Activated CD8-positive, alpha-beta memory T cell treated with anti-CD3 and anti-CD28 coated beads, Interleukin-2, amount 10 ng/mL, durations not matched to agents 7 days and 5 days (primary cell): ENCODE measurements at regions of chr1 and their contacts with region 1.

Region 1: GRCh38 chr1:101288491-101288944 is 51.7 kb downstream of the S1PR1 start:
- DNase-seq: peak; percentile 76
- ATAC-seq: peak; percentile 60
- H3K4me3 Mint-ChIP-seq: no peak overlapping the region
- H3K27ac Mint-ChIP-seq: no peak overlapping the region
- H3K4me1 Mint-ChIP-seq: peaks cover 64% of the 10 kb centered on the region
- H3K27me3 Mint-ChIP-seq: no peaks in the 10 kb centered on the region

Region 2: GRCh38 chr1:100909018-100909417 is 379.5 kb before region 1 on chr1:
- CTCF ChIA-PET with region 1: interaction called, 16 read pairs
- DNase-seq: no peak
- ATAC-seq: no peak
- H3K4me3 Mint-ChIP-seq: no peak overlapping the region
- H3K27ac Mint-ChIP-seq: no peak overlapping the region
- H3K4me1 Mint-ChIP-seq: peaks cover 7% of the 10 kb centered on the region
- H3K27me3 Mint-ChIP-seq: no peaks in the 10 kb centered on the region

Region 3: DNA sequence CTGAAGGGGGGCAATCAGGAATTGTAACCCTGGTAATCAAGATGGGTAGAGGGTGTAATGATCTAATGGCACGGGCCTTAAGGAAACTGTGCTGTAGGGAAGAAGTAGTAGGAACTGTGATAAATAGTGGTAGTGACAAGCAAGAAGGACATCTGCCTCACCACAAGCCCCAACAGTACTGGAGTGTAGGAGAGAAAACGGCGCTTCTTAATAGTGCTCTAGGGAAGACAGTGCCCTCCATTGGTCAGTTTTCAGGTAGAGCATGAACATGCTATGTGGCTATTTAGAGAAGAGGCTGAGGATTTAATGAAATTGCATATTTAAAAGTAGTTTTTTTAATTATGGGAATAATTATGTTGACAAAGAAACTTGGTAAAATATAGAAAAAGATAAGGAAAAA is 360.4 kb before region 1 on chr1:
- CTCF ChIA-PET with region 1: interaction called, 47 read pairs
- DNase-seq: no peak
- ATAC-seq: no peak
- H3K4me3 Mint-ChIP-seq: no peak overlapping the region
- H3K27ac Mint-ChIP-seq: no peak overlapping the region
- H3K4me1 Mint-ChIP-seq: peaks cover 37% of the 10 kb centered on the region
- H3K27me3 Mint-ChIP-seq: no peaks in the 10 kb centered on the region

Region 4: DNA sequence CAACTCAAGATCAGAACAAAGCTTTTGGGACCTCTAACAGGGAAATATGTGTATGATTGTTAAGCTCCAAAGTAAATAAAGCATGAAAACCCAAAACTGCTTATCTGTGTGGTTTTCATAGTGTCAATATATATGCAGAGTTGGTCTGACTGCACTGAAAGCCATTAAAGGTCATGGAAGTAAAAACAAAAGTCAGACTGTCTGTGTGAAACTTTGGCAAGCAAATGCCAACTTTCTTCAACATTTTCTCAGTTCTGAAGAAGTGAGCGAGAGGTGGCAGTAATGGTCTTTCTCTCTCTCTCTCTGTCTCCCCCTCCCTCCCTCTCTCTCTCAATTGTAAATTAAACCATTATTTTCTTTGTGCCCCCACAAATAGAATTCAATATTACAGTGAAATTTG is 151.8 kb before region 1 on chr1:
- CTCF ChIA-PET with region 1: interaction called, 39 read pairs
- DNase-seq: no peak
- ATAC-seq: peak; percentile 82
- H3K4me3 Mint-ChIP-seq: peak overlapping the region; percentile 0
- H3K27ac Mint-ChIP-seq: peak overlapping the region; percentile 65
- H3K4me1 Mint-ChIP-seq: peaks cover 42% of the 10 kb centered on the region
- H3K27me3 Mint-ChIP-seq: no peaks in the 10 kb centered on the region

Region 5: DNA sequence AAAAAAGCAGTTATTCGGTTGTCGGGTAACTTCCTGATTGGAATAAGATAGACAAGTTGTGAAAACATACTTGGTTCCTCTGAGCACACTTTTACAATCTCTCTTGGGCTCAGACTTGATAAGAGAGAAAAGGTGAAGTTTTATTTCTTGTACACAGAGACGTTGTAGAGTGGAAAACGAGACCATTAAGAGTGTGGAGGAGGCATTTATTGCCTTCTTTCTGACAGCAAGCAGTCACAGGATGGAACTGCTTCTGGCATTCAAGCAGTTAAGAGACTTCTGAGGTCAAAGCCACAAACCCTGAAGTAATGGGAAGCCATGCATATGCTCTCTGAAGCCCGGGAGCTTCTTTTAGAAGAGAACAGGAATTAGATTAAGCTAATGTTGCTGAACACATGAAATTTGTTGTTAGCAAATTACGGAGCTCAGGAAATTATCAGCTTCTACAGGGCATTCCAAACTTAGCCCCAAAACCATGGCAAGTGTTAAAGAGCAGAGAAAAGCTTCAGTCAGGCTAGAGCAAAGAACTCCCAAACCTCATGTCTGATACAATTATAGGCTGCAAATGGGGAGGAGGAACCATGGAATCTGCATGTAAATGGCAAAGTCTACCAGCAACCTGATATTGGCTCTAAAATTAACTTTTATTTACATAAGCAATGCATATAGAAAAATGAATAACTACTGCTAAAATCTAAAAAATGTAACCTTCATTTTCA is 25.7 kb before region 1 on chr1:
- CTCF ChIA-PET with region 1: interaction called, 12 read pairs
- DNase-seq: peak; percentile 51
- ATAC-seq: peak; percentile 44
- H3K4me3 Mint-ChIP-seq: peak overlapping the region; percentile 20
- H3K27ac Mint-ChIP-seq: peak overlapping the region; percentile 64
- H3K4me1 Mint-ChIP-seq: peaks cover 66% of the 10 kb centered on the region
- H3K27me3 Mint-ChIP-seq: no peaks in the 10 kb centered on the region